ENCODE measurements at regions of chr2 and their contacts with region 1.

Region 1: GRCh38 chr2:42095923-42096408 is 48.1 kb downstream of the PKDCC start:
- DNase-seq: no peak
- H3K4me3 ChIP-seq: no peak overlapping the region
- H3K27ac ChIP-seq: no peak overlapping the region
- H3K4me1 ChIP-seq: peaks cover 11% of the 10 kb centered on the region
- H3K27me3 ChIP-seq: no peaks in the 10 kb centered on the region
- CTCF ChIP-seq: peak; percentile 66 to 97 (median 73)
- POLR2A ChIP-seq: no peak

Region 2: DNA sequence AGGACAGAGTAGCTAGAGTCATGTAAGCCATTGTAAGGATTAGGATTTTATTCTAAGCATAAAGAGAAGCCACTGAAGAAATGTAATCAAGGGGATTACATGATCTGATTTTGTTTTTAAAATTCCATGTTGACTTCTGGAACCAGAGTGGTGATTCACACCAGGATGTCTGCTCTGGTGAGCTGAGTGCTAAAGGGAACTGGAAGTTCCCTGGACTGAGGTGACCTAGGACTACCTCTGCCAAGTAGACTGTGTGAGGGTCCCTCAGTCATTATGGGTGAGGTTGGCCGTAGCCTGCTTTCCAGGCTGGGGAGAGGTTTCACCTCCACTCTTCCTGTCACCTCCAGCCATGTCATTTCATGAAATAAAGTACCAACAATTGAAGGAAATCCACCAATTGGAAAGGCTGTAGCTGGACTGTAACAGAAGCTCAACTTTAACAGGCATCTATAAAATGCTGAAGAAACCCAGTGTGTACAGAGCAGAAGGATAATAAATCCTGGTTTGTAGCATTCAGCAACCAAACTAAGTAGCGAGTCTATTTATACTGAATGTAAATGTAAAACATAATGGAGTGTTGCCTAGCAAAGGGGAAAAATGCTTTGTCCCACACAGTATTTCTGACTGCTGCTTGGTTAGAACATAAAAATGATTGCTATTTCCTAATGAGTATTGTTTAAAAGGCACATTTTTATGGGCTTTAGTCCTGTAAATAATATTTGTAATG is 555.5 kb before region 1 on chr2:
- intact Hi-C with region 1: loop called (anchors 5 kb)
- DNase-seq: no peak
- H3K4me3 ChIP-seq: no peak overlapping the region
- H3K27ac ChIP-seq: no peak overlapping the region
- H3K4me1 ChIP-seq: no peaks in the 10 kb centered on the region
- H3K27me3 ChIP-seq: no peaks in the 10 kb centered on the region
- CTCF ChIP-seq: no peak
- POLR2A ChIP-seq: no peak

Region 3: DNA sequence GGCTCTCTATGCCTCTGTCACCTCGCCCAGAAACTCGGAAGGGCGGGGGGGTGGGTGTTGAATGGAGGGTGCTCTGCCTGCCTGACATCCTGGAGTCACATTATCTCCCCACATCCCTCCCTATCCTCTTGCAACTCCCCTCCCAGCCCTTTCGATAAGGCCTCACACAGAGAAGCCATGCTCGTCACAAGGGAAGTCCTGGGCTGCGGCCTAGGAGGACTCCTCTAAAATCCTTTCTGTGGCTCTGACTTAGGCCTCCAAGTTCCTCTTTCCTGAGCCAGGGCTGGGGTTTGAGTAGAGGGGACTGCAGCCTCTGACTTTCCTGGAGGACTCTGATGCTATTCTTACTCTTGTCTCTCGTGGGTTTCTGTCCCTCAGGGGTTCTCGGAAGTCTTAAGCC is 123.1 kb before region 1 on chr2:
- intact Hi-C with region 1: no loop called
- DNase-seq: no peak
- H3K4me3 ChIP-seq: no peak overlapping the region
- H3K27ac ChIP-seq: no peak overlapping the region
- H3K4me1 ChIP-seq: peaks cover 5% of the 10 kb centered on the region
- H3K27me3 ChIP-seq: no peaks in the 10 kb centered on the region
- CTCF ChIP-seq: no peak
- POLR2A ChIP-seq: no peak

Region 4: GRCh38 chr2:41985573-41986095 is 110.3 kb before region 1 on chr2:
- intact Hi-C with region 1: no loop called
- DNase-seq: no peak
- H3K4me3 ChIP-seq: no peak overlapping the region
- H3K27ac ChIP-seq: no peak overlapping the region
- H3K4me1 ChIP-seq: no peaks in the 10 kb centered on the region
- H3K27me3 ChIP-seq: no peaks in the 10 kb centered on the region
- CTCF ChIP-seq: no peak
- POLR2A ChIP-seq: no peak

Region 5: GRCh38 chr2:42060718-42061619 is 35.0 kb before region 1 on chr2:
- intact Hi-C with region 1: no loop called
- DNase-seq: peak in 1 of 2 donors; percentile 94
- H3K4me3 ChIP-seq: peak overlapping the region in 1 of 2 donors; percentile 13
- H3K27ac ChIP-seq: peak overlapping the region; percentile 79
- H3K4me1 ChIP-seq: peaks cover 43% of the 10 kb centered on the region
- H3K27me3 ChIP-seq: no peaks in the 10 kb centered on the region
- CTCF ChIP-seq: no peak
- POLR2A ChIP-seq: no peak

Region 6: GRCh38 chr2:42183775-42184174 is 87.8 kb after region 1 on chr2:
- intact Hi-C with region 1: no loop called
- DNase-seq: no peak
- H3K4me3 ChIP-seq: no peak overlapping the region
- H3K27ac ChIP-seq: no peak overlapping the region
- H3K4me1 ChIP-seq: peaks cover 10% of the 10 kb centered on the region
- H3K27me3 ChIP-seq: no peaks in the 10 kb centered on the region
- CTCF ChIP-seq: no peak
- POLR2A ChIP-seq: no peak

Region 7: DNA sequence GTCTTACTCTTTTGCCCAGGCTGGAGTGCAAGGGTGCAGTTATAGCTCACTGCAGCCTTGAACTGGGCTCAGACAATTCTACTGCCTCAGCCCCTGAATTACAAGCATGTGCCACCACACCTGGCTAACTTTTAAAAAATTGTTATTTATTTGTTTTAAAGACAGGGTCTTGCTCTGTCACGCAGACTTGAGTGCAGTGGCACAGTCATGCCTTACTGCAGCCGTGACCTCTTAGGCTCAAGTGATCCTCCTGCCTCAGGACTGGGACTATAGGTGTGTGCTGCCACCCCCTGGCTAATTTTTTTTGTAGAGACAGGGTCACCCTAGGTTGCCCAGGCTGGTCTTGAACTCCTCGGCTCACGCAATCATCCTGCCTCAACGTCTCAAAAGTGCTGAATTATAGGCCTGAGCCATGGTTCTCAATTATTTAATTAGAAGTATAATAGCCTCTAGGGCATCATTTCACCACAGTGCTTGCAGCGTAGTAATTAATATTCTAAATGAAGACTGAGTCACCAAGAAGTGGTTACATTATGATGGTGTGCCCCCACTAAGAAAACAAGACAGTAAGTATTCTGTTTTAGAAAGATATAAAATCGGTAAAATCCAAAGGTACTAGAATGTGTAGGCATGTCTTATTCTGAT is 142.8 kb after region 1 on chr2:
- intact Hi-C with region 1: loop called (anchors 5 kb)
- DNase-seq: no peak
- H3K4me3 ChIP-seq: no peak overlapping the region
- H3K27ac ChIP-seq: no peak overlapping the region
- H3K4me1 ChIP-seq: peaks cover 8% of the 10 kb centered on the region
- H3K27me3 ChIP-seq: no peaks in the 10 kb centered on the region
- CTCF ChIP-seq: peak in 2 of 3 experiments; percentile 44 to 48
- POLR2A ChIP-seq: no peak

Region 8: GRCh38 chr2:42339191-42339912 is 243.4 kb after region 1 on chr2:
- intact Hi-C with region 1: loop called (anchors 10 kb)
- DNase-seq: no peak
- H3K4me3 ChIP-seq: no peak overlapping the region
- H3K27ac ChIP-seq: no peak overlapping the region
- H3K4me1 ChIP-seq: peaks cover 21% of the 10 kb centered on the region
- H3K27me3 ChIP-seq: no peaks in the 10 kb centered on the region
- CTCF ChIP-seq: no peak
- POLR2A ChIP-seq: no peak